ENCODE measurements at regions of chr17 and their contacts with region 1.

Region 1: DNA sequence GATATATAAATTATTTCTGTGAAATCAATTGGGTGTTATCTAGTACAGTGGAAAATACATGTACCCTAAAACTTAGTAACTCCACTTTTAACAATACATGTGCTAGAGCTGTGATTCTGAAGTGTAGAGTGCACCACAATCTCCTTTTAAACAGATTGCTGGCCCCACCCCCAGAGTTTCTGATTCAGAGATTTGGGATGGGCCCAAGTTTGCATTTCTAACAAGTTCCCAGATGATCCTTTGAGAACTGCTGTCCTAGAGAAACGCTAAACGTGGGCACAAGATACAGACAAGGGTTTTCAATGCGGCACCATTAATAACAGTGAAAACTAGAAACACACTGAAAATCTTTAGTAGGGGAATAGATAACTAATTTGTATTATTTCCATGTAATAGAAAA is 49.2 kb downstream of the NXPH3 start:
- DNase-seq: no peak
- H3K4me3 ChIP-seq: no peak overlapping the region
- H3K27ac ChIP-seq: no peak overlapping the region
- H3K4me1 ChIP-seq: no peaks in the 10 kb centered on the region
- H3K27me3 ChIP-seq: no peaks in the 10 kb centered on the region
- CTCF ChIP-seq: no peak

Region 2: GRCh38 chr17:49575579-49576087 is 49.3 kb before region 1 on chr17 and contains the start of gene NXPH3:
- CTCF ChIA-PET with region 1: no interaction called
- dilution Hi-C with region 1: no loop called
- in situ Hi-C with region 1: no loop called
- intact Hi-C with region 1: loop called (anchors 5 kb)
- DNase-seq: peak; percentile 59
- H3K4me3 ChIP-seq: peak within 1 kb of the TSS; percentile 58 to 60 (median 59)
- H3K27ac ChIP-seq: no peak within 1 kb of the TSS
- H3K4me1 ChIP-seq: peaks cover 11% of the 10 kb centered on the region
- H3K27me3 ChIP-seq: no peaks in the 10 kb centered on the region
- CTCF ChIP-seq: peak; percentile 40 to 45
- total RNA-seq, gene NXPH3: 0.33 to 0.35 TPM

Region 3: GRCh38 chr17:49603720-49604119 is 21.2 kb before region 1 on chr17:
- CTCF ChIA-PET with region 1: no interaction called
- dilution Hi-C with region 1: no loop called
- in situ Hi-C with region 1: no loop called
- intact Hi-C with region 1: no loop called
- DNase-seq: no peak
- H3K4me3 ChIP-seq: no peak overlapping the region
- H3K27ac ChIP-seq: no peak overlapping the region
- H3K4me1 ChIP-seq: peaks cover 5% of the 10 kb centered on the region
- H3K27me3 ChIP-seq: no peaks in the 10 kb centered on the region
- CTCF ChIP-seq: peak in 1 of 2 donors; percentile 5

Region 4: GRCh38 chr17:49707608-49708514 is 83.0 kb after region 1 on chr17 and contains the start of gene SLC35B1:
- CTCF ChIA-PET with region 1: no interaction called
- dilution Hi-C with region 1: no loop called
- in situ Hi-C with region 1: no loop called
- intact Hi-C with region 1: no loop called
- DNase-seq: peak; percentile 98
- H3K4me3 ChIP-seq: peak within 1 kb of the TSS; percentile 82 to 94 (median 87)
- H3K27ac ChIP-seq: peak within 1 kb of the TSS; percentile 89
- H3K4me1 ChIP-seq: peaks cover 16% of the 10 kb centered on the region
- H3K27me3 ChIP-seq: no peaks in the 10 kb centered on the region
- CTCF ChIP-seq: peak; percentile 92 to 96
- total RNA-seq, gene SLC35B1: 35.5 to 55.9 TPM

Measured in mammary epithelial cell (primary cell).